K562 (cell line): ENCODE measurements at regions of chr4 and their contacts with region 1.

Region 1: GRCh38 chr4:39638354-39639240 is at the start of gene SMIM14:
- DNase-seq: peak; percentile 97 to 98 (median 98)
- ATAC-seq: peak; percentile 95
- H3K4me3 ChIP-seq: peak within 1 kb of the TSS; percentile 90
- H3K27ac ChIP-seq: peak within 1 kb of the TSS; percentile 93
- H3K4me1 ChIP-seq: peaks cover 5 to 8% of the 10 kb centered on the region in 2 experiments; a peak in 3 of 5 replicates
- H3K27me3 ChIP-seq: no peaks in the 10 kb centered on the region
- CTCF ChIP-seq: peak in 1 of 3 experiments; percentile 14; a peak in 1 of 6 replicates
- EP300 ChIP-seq: peak; percentile 80
- POLR2A ChIP-seq: peak; percentile 88
- RAD21 ChIP-seq: no peak
- polyA plus RNA-seq, gene SMIM14: 3.0 to 3.7 TPM

Region 2: GRCh38 chr4:38949411-38950051 is 689.1 kb before region 1 on chr4:
- CTCF ChIA-PET with region 1: no interaction called
- POLR2A ChIA-PET with region 1: no interaction called
- in situ Hi-C with region 1: loop called (anchors 10 kb)
- intact Hi-C with region 1: no loop called
- DNase-seq: no peak
- ATAC-seq: no peak
- H3K4me3 ChIP-seq: no peak overlapping the region
- H3K27ac ChIP-seq: no peak overlapping the region
- H3K4me1 ChIP-seq: no peaks in the 10 kb centered on the region
- H3K27me3 ChIP-seq: peaks cover 16 to 18% of the 10 kb centered on the region in 2 experiments; a peak in 3 of 5 replicates
- CTCF ChIP-seq: no peak
- EP300 ChIP-seq: no peak
- POLR2A ChIP-seq: no peak
- RAD21 ChIP-seq: no peak

Region 3: DNA sequence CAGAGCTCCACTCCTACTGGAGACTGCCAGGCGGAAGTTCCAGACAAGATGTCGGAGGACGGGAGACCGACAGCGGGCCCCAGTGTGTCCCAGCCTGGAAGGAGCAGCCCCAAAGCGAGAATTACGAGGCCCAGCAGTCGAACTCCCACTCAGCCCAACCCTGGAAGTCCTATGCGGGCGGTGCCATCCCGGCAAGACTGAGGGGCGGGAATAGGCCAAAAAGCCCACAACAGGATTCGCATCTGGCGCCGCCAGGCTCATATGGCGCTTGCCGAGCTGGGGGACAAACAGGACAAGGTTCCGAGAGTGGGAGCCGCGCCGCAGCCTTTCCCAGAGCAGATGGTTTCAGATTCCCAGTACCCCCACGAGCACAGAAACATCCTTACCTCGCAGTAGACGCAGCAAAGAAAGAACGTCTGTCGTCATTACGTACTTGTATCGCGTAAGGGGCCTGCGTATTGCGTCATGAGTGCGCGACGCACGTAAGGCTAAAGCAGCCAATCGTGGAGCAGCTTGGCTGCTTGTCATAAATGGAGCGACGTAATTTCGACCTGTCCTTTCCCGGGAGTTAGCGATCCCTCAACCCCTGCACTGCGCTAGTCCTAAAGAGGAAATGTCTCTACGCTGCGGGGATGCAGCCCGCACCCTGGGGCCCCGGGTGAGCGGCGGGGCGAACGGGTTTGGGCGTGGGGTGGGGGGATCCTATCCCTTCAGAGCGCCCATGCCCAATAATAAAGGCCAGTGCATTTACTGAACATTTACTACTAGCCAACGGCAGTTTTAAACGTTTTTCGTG is 179.9 kb before region 1 on chr4 and contains the starts of genes LIAS and RPL9:
- CTCF ChIA-PET with region 1: no interaction called
- POLR2A ChIA-PET with region 1: interaction called, 20 read pairs
- in situ Hi-C with region 1: no loop called
- intact Hi-C with region 1: no loop called
- DNase-seq: peak; percentile 91 to 99 (median 95)
- ATAC-seq: peak; percentile 95
- H3K4me3 ChIP-seq: peak within 1 kb of the TSS; percentile 82
- H3K27ac ChIP-seq: peak within 1 kb of the TSS; percentile 93
- H3K4me1 ChIP-seq: peaks cover 3 to 12% of the 10 kb centered on the region in 2 experiments; a peak in 4 of 5 replicates
- H3K27me3 ChIP-seq: no peaks in the 10 kb centered on the region
- CTCF ChIP-seq: no peak; a peak in 1 of 6 replicates
- EP300 ChIP-seq: peak; percentile 56; the same call in 1 of the 2 replicates
- POLR2A ChIP-seq: peak; percentile 99
- RAD21 ChIP-seq: no peak
- polyA plus RNA-seq, gene LIAS: 40.3 to 56.6 TPM
- polyA plus RNA-seq, gene RPL9: 3,844 to 3,942 TPM

Region 4: GRCh38 chr4:39527273-39528060 is 111.1 kb before region 1 on chr4 and contains the start of gene UGDH:
- CTCF ChIA-PET with region 1: no interaction called
- POLR2A ChIA-PET with region 1: interaction called, 3 read pairs
- in situ Hi-C with region 1: no loop called
- intact Hi-C with region 1: loop called (anchors 2 kb)
- DNase-seq: peak; percentile 97
- ATAC-seq: peak; percentile 99
- H3K4me3 ChIP-seq: peak within 1 kb of the TSS; percentile 81
- H3K27ac ChIP-seq: peak within 1 kb of the TSS; percentile 83
- H3K4me1 ChIP-seq: peaks cover 5 to 20% of the 10 kb centered on the region in 2 experiments; a peak in 4 of 5 replicates
- H3K27me3 ChIP-seq: no peaks in the 10 kb centered on the region
- CTCF ChIP-seq: peak in 1 of 3 experiments; percentile 8; a peak in 1 of 6 replicates
- EP300 ChIP-seq: peak; percentile 23; the same call in 1 of the 2 replicates
- POLR2A ChIP-seq: peak; percentile 93
- RAD21 ChIP-seq: no peak; a peak in 2 of 4 replicates
- polyA plus RNA-seq, gene UGDH: 5.5 to 6.8 TPM

Region 5: DNA sequence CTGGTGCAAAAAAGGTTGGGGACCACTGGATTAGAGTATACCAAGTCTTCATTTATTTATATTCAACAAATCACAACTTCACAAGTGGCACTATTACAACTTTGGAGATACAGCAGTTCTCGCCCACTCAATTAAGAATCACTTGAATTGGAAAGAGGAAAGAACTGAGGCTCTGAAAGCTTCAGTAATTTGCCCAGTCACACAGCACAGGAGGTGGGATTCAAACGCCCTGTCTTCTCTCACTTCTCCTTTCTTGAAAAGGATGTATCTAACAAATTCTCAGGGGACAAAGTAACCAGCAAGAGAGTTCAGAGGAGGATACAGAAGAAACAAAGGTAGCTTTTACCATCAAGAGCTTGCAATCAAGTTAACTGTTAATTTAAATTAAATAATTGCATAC is 12.3 kb before region 1 on chr4:
- CTCF ChIA-PET with region 1: no interaction called
- POLR2A ChIA-PET with region 1: interaction called, 14 read pairs
- in situ Hi-C with region 1: no loop called
- intact Hi-C with region 1: no loop called
- DNase-seq: no peak
- ATAC-seq: no peak
- H3K4me3 ChIP-seq: no peak overlapping the region
- H3K27ac ChIP-seq: no peak overlapping the region
- H3K4me1 ChIP-seq: 0 out of 5 replicates have a peak, but pooled peaks cover 0 to 6% of the 10 kb centered on the region in 2 experiments
- H3K27me3 ChIP-seq: no peaks in the 10 kb centered on the region
- CTCF ChIP-seq: no peak
- EP300 ChIP-seq: no peak
- POLR2A ChIP-seq: no peak
- RAD21 ChIP-seq: no peak

Region 6: GRCh38 chr4:39648815-39649558 is 10.4 kb after region 1 on chr4:
- CTCF ChIA-PET with region 1: no interaction called
- POLR2A ChIA-PET with region 1: interaction called, 14 read pairs
- in situ Hi-C with region 1: no loop called
- intact Hi-C with region 1: no loop called
- DNase-seq: no peak
- ATAC-seq: no peak
- H3K4me3 ChIP-seq: no peak overlapping the region
- H3K27ac ChIP-seq: no peak overlapping the region
- H3K4me1 ChIP-seq: no peaks in the 10 kb centered on the region; a peak in 1 of 5 replicates
- H3K27me3 ChIP-seq: no peaks in the 10 kb centered on the region
- CTCF ChIP-seq: no peak
- EP300 ChIP-seq: no peak
- POLR2A ChIP-seq: no peak
- RAD21 ChIP-seq: no peak